Dorsolateral prefrontal cortex (tissue), 120 donors: ENCODE measurements at regions of chr5 and their contacts with region 1.

Region 1: DNA sequence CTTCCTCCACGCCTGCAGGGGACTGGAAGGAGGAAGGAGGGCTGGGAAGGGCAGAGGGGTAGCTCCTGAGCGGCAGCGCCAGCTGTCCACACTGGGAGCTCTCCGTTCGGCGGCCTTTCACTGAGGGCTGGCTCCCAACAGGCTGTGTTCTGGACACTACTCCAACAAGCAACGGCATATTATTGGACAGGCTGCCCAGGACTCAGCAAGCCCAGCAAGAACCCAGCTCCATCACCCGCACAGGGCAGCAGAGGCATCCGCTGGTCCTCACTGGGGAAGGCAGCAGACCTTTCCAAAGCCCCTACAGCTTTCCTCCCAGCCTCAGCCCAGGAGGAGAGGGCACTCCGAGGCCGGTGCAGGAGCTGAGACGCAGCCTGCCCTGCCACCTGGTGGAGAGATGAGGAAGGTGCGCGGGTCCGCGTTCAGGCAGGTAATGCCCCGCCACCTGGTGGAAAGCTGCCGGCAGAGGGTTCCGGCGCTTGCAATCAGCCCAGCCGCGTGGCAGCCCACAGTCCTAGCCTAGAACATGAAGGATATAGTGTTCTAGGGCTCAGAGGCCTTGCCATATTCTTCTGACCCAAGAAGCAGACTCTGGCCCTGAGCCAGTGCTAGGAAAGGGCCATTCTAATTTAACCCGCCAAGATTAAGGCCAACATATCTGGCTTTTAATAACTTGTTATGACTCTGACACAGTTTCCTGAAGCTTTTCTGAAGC is 74.4 kb downstream of the NRG2 start:
- DNase-seq: peak; percentile 75 to 96 (median 87)
- H3K4me3 ChIP-seq: peak overlapping the region in 19 of 59 donors; percentile 1 to 54 (median 17)
- H3K27ac ChIP-seq: peak overlapping the region in 22 of 59 donors; percentile 0 to 77 (median 46)
- H3K27me3 ChIP-seq: no peaks in the 10 kb centered on the region
- CTCF ChIP-seq: peak; percentile 95 to 100 (median 100)

Region 2: DNA sequence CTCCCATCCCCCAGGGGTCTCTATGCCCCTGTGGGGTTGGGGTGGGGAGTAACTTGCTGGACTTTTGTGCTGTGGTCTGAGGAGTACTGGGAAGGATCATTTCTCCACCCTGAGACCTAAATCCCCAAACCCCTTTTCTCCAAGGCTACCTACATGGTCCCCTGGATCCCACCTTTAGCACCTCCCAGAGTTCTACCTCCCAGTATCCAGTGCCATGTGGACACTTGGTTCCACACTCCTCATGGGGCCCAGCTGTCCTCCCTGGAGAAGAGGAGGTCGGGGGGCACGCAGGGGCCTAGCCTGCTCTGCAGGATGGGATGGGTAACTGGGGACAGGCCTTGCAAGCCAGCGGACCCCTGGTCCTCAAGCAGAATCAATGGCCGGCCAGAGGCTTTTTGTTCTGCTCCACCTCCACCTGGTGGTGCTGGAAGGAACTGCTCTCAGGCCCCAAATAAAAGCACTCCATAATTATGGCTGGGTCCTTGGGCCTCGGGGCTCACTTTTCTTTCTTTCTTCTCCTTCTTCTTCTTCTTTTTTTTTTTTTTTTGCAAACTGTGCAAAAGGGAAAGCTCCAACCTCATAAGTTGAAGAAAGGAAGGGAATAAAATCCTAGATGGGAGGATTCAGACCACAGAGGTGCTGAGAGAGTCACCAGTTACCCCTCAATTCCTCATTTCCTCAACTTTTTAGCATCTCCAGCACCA is 104.7 kb before region 1 on chr5:
- intact Hi-C with region 1: loop called (anchors 5 kb)
- DNase-seq: peak; percentile 61 to 82 (median 74)
- H3K4me3 ChIP-seq: no peak overlapping the region
- H3K27ac ChIP-seq: peak overlapping the region in 57 of 59 donors; percentile 28 to 92 (median 82)
- H3K27me3 ChIP-seq: no peaks in the 10 kb centered on the region
- CTCF ChIP-seq: peak; percentile 80 to 97 (median 92)

Region 3: GRCh38 chr5:139869042-139869790 is 99.5 kb before region 1 on chr5:
- intact Hi-C with region 1: loop called (anchors 5 kb)
- DNase-seq: no peak
- H3K4me3 ChIP-seq: peak overlapping the region in 8 of 59 donors; percentile 2 to 26 (median 10)
- H3K27ac ChIP-seq: peak overlapping the region in 56 of 59 donors; percentile 1 to 88 (median 72)
- H3K27me3 ChIP-seq: no peaks in the 10 kb centered on the region
- CTCF ChIP-seq: no peak

Region 4: DNA sequence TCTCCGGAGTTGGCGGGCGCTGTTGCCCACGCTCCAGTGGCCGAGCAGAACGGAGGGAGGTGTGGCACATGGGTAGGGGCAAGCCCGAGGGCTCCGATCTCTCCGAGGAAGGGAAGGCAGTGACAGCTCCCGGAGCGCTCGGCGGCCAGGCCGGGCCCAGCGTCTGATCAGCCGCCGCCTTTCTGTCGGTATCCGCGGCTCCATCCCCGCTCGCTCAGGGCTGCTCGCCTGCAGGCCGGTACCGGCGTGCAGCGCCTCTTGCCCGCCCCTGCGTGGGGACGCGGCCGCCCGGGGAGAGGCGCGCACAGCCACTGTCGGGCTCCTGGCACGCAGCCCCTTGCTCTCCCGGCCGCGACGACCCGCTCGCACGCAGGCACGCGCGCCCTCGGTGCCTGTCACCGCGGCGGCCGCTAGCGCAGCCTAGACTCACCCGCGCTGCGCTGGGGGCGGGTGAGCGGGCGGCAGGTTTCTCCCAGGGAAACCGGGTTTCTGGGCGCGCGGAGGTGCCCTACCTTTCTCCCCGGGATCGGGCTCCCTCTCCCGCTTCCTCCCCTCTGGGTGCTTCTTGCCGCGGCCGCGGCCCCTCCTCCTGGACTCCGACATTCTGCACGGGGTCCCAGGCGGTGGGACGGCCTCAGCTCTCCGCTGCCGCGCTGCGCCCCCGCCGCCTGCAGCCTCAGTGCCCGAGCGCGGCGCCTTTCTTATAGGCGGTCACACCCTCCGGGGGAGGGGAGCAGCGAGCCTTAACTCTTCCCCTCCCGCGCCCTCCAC is 64.7 kb before region 1 on chr5:
- intact Hi-C with region 1: loop called in 1 of 2 experiments (anchors 5 kb)
- DNase-seq: peak in 7 of 10 donors; percentile 26 to 75 (median 56)
- H3K4me3 ChIP-seq: peak overlapping the region; percentile 47 to 85 (median 71)
- H3K27ac ChIP-seq: peak overlapping the region in 54 of 59 donors; percentile 7 to 89 (median 69)
- H3K27me3 ChIP-seq: no peaks in the 10 kb centered on the region
- CTCF ChIP-seq: peak in 13 of 56 donors; percentile 4 to 38 (median 21)

Region 5: GRCh38 chr5:140042643-140043500 is 74.2 kb after region 1 on chr5 and contains the start of gene NRG2:
- intact Hi-C with region 1: loop called in 1 of 2 experiments (anchors 5 kb)
- DNase-seq: peak; percentile 62 to 89 (median 75)
- H3K4me3 ChIP-seq: peak within 1 kb of the TSS; percentile 52 to 88 (median 80)
- H3K27ac ChIP-seq: peak within 1 kb of the TSS; percentile 41 to 94 (median 85)
- H3K27me3 ChIP-seq: no peaks in the 10 kb centered on the region
- CTCF ChIP-seq: peak in 52 of 56 donors; percentile 27 to 77 (median 59)
- total RNA-seq, gene NRG2: 5.8 to 21.5 (median 11.8) TPM

Region 6: DNA sequence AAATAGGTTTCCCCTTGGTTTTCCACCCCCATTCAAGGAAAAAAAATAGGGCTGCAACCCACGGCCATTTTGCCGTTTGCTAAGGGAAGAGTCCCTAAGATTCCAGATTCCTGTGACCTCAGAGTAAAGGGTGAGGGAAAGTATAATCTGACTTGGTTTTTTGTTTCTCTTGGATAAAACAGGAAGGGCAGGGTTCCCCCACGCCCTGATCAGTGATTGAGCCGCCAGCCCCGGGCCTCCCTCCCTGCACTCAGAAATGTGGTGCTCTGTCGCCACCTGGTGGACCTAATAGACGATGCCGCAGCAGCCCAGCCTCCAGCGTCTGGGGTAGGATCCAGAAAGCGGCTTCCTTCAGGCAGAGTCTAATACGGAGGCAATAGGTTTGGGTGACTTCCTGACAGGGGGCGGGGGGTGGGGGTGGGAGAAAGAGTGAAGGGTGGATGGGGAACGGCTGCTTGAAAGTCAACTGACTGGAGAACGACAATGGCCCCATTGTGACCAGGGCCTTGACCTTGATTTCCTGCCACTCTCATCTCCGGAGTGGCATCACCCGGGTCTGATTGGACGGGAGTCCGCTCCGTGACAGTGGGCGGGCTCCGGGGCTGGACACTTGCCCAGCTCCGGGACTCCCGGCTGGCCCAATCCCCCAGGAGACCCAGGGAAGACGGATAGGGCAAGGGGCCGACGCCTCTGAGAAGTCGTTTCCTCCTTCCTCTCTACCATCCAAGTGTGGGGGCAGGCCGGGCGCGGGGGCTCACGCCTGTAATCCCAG is 188.5 kb after region 1 on chr5:
- intact Hi-C with region 1: loop called in 1 of 2 experiments (anchors 5 kb)
- DNase-seq: peak; percentile 81 to 91 (median 90)
- H3K4me3 ChIP-seq: peak overlapping the region; percentile 27 to 73 (median 58)
- H3K27ac ChIP-seq: peak overlapping the region; percentile 41 to 93 (median 84)
- H3K27me3 ChIP-seq: no peaks in the 10 kb centered on the region
- CTCF ChIP-seq: peak; percentile 59 to 98 (median 93)